CD4-positive, alpha-beta T cell (primary cell): ENCODE measurements at regions of chr15 and their contacts with region 1.

Region 1: GRCh38 chr15:89740137-89740536 is 10.9 kb downstream of the MESP1 start:
- DNase-seq: peak in 13 of 14 experiments; percentile 15 to 82 (median 44)
- ATAC-seq: peak; percentile 86
- H3K4me3 ChIP-seq: no peak overlapping the region
- H3K4me3 Mint-ChIP-seq: no peak overlapping the region
- H3K27ac ChIP-seq: no peak overlapping the region
- H3K27ac Mint-ChIP-seq: no peak overlapping the region
- H3K4me1 ChIP-seq: peaks cover 3% of the 10 kb centered on the region
- H3K4me1 Mint-ChIP-seq: no peaks in the 10 kb centered on the region
- H3K27me3 ChIP-seq: peaks cover 0 to 6% of the 10 kb centered on the region in 2 experiments
- H3K27me3 Mint-ChIP-seq: peaks cover 5% of the 10 kb centered on the region
- CTCF ChIP-seq: peak; percentile 91

Region 2: GRCh38 chr15:89874926-89875564 is 134.9 kb after region 1 on chr15:
- CTCF ChIA-PET with region 1: no interaction called
- POLR2A ChIA-PET with region 1: no interaction called
- intact Hi-C with region 1: loop called (anchors 1 to 2 kb)
- DNase-seq: peak; percentile 67 to 88 (median 77)
- ATAC-seq: peak; percentile 100
- H3K4me3 ChIP-seq: no peak overlapping the region
- H3K4me3 Mint-ChIP-seq: no peak overlapping the region
- H3K27ac ChIP-seq: no peak overlapping the region
- H3K27ac Mint-ChIP-seq: no peak overlapping the region
- H3K4me1 ChIP-seq: peaks cover 5% of the 10 kb centered on the region
- H3K4me1 Mint-ChIP-seq: peaks cover 7% of the 10 kb centered on the region
- H3K27me3 ChIP-seq: no peaks in the 10 kb centered on the region
- H3K27me3 Mint-ChIP-seq: no peaks in the 10 kb centered on the region
- CTCF ChIP-seq: peak; percentile 98

Region 3: GRCh38 chr15:90071208-90071807 is 331.2 kb after region 1 on chr15:
- CTCF ChIA-PET with region 1: no interaction called
- POLR2A ChIA-PET with region 1: no interaction called
- intact Hi-C with region 1: loop called (anchors 1 to 5 kb)
- DNase-seq: peak; percentile 65 to 89 (median 79)
- ATAC-seq: peak; percentile 98
- H3K4me3 ChIP-seq: no peak overlapping the region
- H3K4me3 Mint-ChIP-seq: no peak overlapping the region
- H3K27ac ChIP-seq: no peak overlapping the region
- H3K27ac Mint-ChIP-seq: peak overlapping the region; percentile 69
- H3K4me1 ChIP-seq: peaks cover 9% of the 10 kb centered on the region
- H3K4me1 Mint-ChIP-seq: peaks cover 6% of the 10 kb centered on the region
- H3K27me3 ChIP-seq: no peaks in the 10 kb centered on the region
- H3K27me3 Mint-ChIP-seq: no peaks in the 10 kb centered on the region
- CTCF ChIP-seq: peak; percentile 83

Region 4: GRCh38 chr15:90086868-90087268 is 346.7 kb after region 1 on chr15:
- CTCF ChIA-PET with region 1: no interaction called
- POLR2A ChIA-PET with region 1: interaction called, 3 read pairs
- intact Hi-C with region 1: loop called (anchors 1 to 2 kb)
- DNase-seq: peak in 13 of 14 experiments; percentile 23 to 71 (median 47)
- ATAC-seq: peak; percentile 85
- H3K4me3 ChIP-seq: no peak overlapping the region
- H3K4me3 Mint-ChIP-seq: no peak overlapping the region
- H3K27ac ChIP-seq: no peak overlapping the region
- H3K27ac Mint-ChIP-seq: peak overlapping the region; percentile 59
- H3K4me1 ChIP-seq: peaks cover 11% of the 10 kb centered on the region
- H3K4me1 Mint-ChIP-seq: peaks cover 9% of the 10 kb centered on the region
- H3K27me3 ChIP-seq: no peaks in the 10 kb centered on the region
- H3K27me3 Mint-ChIP-seq: no peaks in the 10 kb centered on the region
- CTCF ChIP-seq: peak; percentile 66

Region 5: DNA sequence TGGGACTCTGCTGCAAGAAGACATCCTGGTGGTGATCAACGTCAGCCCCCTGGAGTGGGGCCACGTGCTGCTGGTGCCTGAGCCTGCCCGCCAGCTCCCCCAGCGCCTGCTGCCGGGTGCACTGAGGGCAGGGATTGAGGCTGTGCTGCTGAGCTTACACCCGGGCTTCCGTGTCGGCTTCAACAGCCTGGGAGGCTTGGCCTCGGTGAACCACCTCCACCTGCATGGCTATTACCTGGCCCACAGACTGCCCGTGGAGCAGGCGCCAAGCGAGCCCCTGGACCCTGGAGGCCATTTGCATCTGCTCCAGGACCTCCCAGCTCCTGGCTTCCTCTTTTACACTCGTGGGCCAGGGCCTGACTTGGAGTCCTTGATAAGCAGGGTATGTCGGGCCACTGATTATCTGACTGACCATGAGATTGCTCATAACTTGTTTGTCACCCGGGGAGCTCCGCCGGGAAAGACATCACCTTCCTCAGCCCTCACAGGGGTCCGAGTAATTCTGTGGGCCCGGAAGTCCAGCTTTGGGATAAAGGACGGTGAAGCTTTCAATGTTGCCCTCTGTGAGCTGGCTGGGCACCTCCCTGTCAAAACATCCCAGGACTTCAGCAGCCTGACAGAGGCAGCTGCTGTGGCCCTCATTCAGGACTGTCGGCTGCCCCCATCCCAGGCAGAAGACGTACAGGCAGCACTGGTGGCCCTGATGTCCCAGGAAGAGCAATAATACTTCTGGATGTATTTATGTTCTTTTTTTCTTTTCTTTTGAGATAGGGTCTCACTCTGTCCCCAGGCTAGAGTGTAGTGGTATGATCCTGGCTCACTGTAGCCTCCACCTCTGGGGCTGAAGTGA is 501.4 kb after region 1 on chr15:
- CTCF ChIA-PET with region 1: no interaction called
- POLR2A ChIA-PET with region 1: no interaction called
- intact Hi-C with region 1: no loop called
- DNase-seq: no peak
- ATAC-seq: no peak
- H3K4me3 ChIP-seq: no peak overlapping the region
- H3K4me3 Mint-ChIP-seq: no peak overlapping the region
- H3K27ac ChIP-seq: no peak overlapping the region
- H3K27ac Mint-ChIP-seq: no peak overlapping the region
- H3K4me1 ChIP-seq: no peaks in the 10 kb centered on the region
- H3K4me1 Mint-ChIP-seq: no peaks in the 10 kb centered on the region
- H3K27me3 ChIP-seq: no peaks in the 10 kb centered on the region
- H3K27me3 Mint-ChIP-seq: no peaks in the 10 kb centered on the region
- CTCF ChIP-seq: no peak

Region 6: GRCh38 chr15:90286678-90287077 is 546.5 kb after region 1 on chr15:
- CTCF ChIA-PET with region 1: no interaction called
- POLR2A ChIA-PET with region 1: no interaction called
- intact Hi-C with region 1: loop called in 1 of 2 experiments (anchors 10 kb)
- DNase-seq: peak in 11 of 14 experiments; percentile 14 to 77 (median 44)
- ATAC-seq: peak; percentile 98
- H3K4me3 ChIP-seq: no peak overlapping the region
- H3K4me3 Mint-ChIP-seq: no peak overlapping the region
- H3K27ac ChIP-seq: no peak overlapping the region
- H3K27ac Mint-ChIP-seq: no peak overlapping the region
- H3K4me1 ChIP-seq: peaks cover 2% of the 10 kb centered on the region
- H3K4me1 Mint-ChIP-seq: no peaks in the 10 kb centered on the region
- H3K27me3 ChIP-seq: no peaks in the 10 kb centered on the region
- H3K27me3 Mint-ChIP-seq: no peaks in the 10 kb centered on the region
- CTCF ChIP-seq: peak; percentile 89